Calu3 (cell line): ENCODE measurements at regions of chr17 and their contacts with region 1.

Region 1: GRCh38 chr17:29891131-29891530 is 38.9 kb downstream of the SSH2 start:
- DNase-seq: no peak
- H3K4me3 Mint-ChIP-seq: no peak overlapping the region
- H3K27ac Mint-ChIP-seq: no peak overlapping the region
- H3K4me1 Mint-ChIP-seq: no peaks in the 10 kb centered on the region
- H3K27me3 Mint-ChIP-seq: no peaks in the 10 kb centered on the region
- CTCF ChIP-seq: no peak

Region 2: DNA sequence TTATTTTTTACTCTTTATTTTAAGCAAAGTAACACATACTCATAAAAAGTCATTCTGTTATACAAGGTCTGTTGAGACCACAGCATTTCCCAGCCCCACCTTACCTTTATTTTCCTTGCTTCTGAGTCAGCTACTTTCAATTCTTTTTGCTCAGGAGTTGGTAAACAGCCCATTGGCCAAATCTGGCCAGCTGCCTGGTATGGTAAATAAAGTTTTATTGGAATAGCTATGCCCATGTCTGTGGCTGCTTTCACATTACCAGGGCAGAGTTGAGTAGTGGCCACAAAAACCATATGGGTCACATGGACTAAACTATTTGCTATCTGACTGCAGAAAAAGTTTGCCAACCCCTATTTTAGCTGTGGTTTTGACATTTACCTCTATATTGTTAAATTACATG is 222.1 kb after region 1 on chr17:
- CTCF ChIA-PET with region 1: interaction called, 16 read pairs
- intact Hi-C with region 1: no loop called
- DNase-seq: peak; percentile 6
- H3K4me3 Mint-ChIP-seq: no peak overlapping the region
- H3K27ac Mint-ChIP-seq: no peak overlapping the region
- H3K4me1 Mint-ChIP-seq: peaks cover 2% of the 10 kb centered on the region
- H3K27me3 Mint-ChIP-seq: no peaks in the 10 kb centered on the region
- CTCF ChIP-seq: no peak